OCI-LY7 (cell line): ENCODE measurements at regions of chr2 and their contacts with region 1.

Region 1: DNA sequence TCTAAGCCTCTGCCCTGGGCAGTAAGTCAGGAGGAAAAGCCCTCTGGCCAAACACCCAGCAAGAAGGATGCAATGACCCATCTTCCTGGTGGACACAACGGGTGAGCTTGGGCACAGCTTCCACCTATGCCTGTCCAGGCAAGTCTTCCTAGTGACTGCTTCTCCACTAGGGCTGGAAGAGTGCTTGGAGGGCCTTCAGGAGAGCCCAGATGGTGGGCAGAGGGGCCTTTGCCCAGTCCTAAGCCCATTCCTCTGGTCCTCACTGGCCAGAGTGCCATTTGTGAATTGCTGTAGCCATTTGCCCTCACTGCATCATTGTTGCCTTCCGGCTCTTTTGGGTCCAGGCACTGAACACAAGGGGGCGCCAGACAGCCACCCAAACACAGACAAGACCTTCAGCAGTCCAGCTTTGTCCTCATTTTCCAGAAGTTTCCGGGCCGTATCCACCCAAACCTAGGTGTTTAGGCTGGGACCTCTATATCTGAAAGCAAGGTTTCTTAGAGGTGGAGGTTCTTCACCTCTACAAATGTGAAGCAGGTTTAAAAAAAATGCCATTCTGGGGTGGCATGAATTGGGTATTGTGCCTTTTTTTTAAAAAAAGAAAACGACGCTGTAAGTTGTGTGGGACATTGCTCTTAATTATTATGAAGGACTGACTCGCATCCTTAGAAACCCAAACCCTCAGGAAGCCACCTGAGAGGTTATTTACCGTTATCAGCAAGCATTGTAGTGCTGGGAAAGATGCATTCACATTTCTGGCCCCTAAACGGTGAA is 29.5 kb downstream of the PAX8 start:
- DNase-seq: peak; percentile 65
- H3K4me3 ChIP-seq: no peak overlapping the region
- H3K27ac ChIP-seq: no peak overlapping the region
- H3K4me1 ChIP-seq: no peaks in the 10 kb centered on the region
- CTCF ChIP-seq: peak; percentile 95

Region 2: DNA sequence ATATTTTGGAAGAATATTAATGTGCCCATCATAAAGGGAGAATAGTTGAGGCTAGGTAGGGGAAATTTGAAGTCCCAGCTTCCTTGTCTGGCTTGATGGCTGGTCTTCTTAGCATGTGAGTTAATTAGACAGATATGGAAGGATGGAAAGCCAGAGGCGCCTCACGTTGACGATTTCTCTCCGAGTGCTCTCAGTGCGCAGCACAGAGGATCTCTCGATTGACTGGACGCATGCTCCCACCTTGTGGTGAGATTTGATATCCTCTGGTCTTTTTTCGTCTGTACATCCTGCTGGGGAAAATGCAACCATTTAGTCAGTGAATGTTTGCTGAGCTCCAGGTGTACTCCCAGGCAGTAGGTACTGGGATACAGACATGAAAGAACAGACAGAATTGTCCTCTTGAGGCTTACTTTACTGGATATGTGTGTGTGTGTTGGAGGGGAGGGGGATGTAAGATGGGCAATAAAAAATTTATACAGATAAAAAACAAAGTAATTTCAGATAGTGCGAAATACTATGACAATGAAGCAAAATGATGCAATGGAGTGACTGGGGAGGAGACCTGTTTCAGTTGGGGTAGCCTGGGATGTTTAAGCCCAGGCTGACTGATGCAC is 121.4 kb after region 1 on chr2:
- CTCF ChIA-PET with region 1: no interaction called
- POLR2A ChIA-PET with region 1: no interaction called
- intact Hi-C with region 1: loop called (anchors 5 kb)
- DNase-seq: peak; percentile 59
- H3K4me3 ChIP-seq: no peak overlapping the region
- H3K27ac ChIP-seq: no peak overlapping the region
- H3K4me1 ChIP-seq: no peaks in the 10 kb centered on the region
- CTCF ChIP-seq: peak; percentile 75

Region 3: DNA sequence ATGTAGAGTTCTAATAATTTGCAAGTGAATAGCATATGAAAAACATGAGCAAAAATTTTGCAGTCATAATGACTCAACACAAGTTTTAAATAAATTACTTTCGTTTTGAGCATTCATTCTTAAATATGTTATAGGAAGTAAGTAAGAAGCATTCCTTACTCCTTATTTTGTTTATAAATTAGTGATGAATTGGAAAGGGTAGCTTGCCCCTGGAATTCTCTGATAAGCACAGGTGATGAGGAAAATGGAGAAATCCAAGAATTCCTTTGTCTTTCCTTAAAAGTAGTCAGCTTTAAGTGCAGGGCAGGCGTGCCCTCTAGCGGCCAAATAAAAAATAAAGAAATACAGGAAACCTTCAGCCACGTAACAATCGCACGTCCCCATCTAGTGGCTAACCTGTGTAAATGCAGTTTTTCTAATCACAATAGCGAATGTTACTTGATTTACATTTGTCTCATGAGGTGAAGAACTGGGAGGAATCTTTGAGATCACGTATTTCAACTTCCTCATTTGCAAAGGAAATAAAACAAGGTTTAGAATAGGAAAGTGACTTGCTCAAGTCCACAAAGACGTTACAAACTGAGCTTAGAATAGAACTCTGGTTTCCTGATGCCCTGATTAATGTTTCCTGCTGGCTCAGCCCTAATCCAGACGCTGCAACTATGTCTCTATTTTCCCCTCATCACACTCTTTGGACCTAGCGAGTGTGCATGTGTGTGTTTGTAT is 141.1 kb after region 1 on chr2:
- CTCF ChIA-PET with region 1: no interaction called
- POLR2A ChIA-PET with region 1: no interaction called
- intact Hi-C with region 1: loop called (anchors 2 kb)
- DNase-seq: peak; percentile 87
- H3K4me3 ChIP-seq: peak overlapping the region; percentile 4
- H3K27ac ChIP-seq: peak overlapping the region; percentile 38
- H3K4me1 ChIP-seq: peaks cover 4% of the 10 kb centered on the region
- CTCF ChIP-seq: peak; percentile 99